T-cell (primary cell): ENCODE measurements at regions of chrX and their contacts with region 1.

Region 1: DNA sequence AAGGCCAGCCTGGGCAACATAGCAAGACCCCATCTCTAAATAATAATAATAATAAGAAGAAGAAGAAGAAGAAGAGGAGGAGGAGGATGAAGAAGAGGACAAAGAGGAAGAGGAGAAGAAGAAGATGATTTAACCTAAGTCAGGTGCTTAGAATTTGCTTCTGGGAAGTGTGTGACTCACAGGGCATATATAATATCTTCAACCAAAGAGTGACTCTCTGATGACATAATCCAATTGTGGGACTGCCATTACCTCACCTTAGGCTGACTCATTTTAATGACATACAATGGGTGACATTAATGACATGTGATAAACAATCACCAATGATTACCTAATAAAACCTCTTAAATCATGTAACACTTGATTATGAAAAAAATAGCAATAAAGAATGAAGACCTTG is 32.7 kb upstream of the MBTPS2 start:
- DNase-seq: no peak
- ATAC-seq: no peak
- H3K4me3 ChIP-seq: no peak overlapping the region
- H3K4me3 Mint-ChIP-seq: no peak overlapping the region
- H3K27ac ChIP-seq: no peak overlapping the region
- H3K27ac Mint-ChIP-seq: no peak overlapping the region
- H3K4me1 ChIP-seq: no peaks in the 10 kb centered on the region
- H3K4me1 Mint-ChIP-seq: no peaks in the 10 kb centered on the region
- H3K27me3 ChIP-seq: no peaks in the 10 kb centered on the region
- H3K27me3 Mint-ChIP-seq: no peaks in the 10 kb centered on the region

Region 2: DNA sequence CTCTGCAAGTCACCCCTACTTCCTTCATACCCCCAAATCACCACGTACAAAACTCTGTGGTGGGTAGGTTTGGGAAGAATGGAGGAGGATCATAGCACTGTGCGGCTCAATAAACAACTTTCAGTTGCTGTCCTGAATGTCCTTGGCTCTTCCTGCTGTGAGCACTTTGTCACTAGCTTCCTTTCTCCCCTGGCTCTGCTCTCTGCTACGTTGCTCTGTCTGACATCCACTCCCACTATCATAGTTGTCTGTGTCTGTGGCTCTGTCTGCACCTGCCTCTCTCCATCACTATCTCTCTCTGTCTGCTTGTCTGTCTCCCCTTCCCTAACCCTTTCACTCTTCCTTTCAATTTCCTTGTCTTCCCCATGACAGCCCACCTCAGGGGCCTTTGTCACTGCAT is 27.6 kb before region 1 on chrX:
- CTCF ChIA-PET with region 1: no interaction called
- POLR2A ChIA-PET with region 1: interaction called in 1 of 2 experiments, 17 read pairs
- DNase-seq: no peak
- ATAC-seq: no peak
- H3K4me3 ChIP-seq: no peak overlapping the region
- H3K4me3 Mint-ChIP-seq: no peak overlapping the region
- H3K27ac ChIP-seq: no peak overlapping the region
- H3K27ac Mint-ChIP-seq: no peak overlapping the region
- H3K4me1 ChIP-seq: no peaks in the 10 kb centered on the region
- H3K4me1 Mint-ChIP-seq: peaks cover 0 to 4% (median 2%) of the 10 kb centered on the region in 3 donors
- H3K27me3 ChIP-seq: no peaks in the 10 kb centered on the region
- H3K27me3 Mint-ChIP-seq: no peaks in the 10 kb centered on the region

Region 3: GRCh38 chrX:21905269-21905668 is 98.6 kb after region 1 on chrX:
- CTCF ChIA-PET with region 1: no interaction called
- POLR2A ChIA-PET with region 1: no interaction called
- DNase-seq: no peak
- ATAC-seq: no peak
- H3K4me3 ChIP-seq: no peak overlapping the region
- H3K4me3 Mint-ChIP-seq: no peak overlapping the region
- H3K27ac ChIP-seq: no peak overlapping the region
- H3K27ac Mint-ChIP-seq: no peak overlapping the region
- H3K4me1 ChIP-seq: no peaks in the 10 kb centered on the region
- H3K4me1 Mint-ChIP-seq: no peaks in the 10 kb centered on the region
- H3K27me3 ChIP-seq: no peaks in the 10 kb centered on the region
- H3K27me3 Mint-ChIP-seq: peaks cover 0 to 6% of the 10 kb centered on the region in 2 donors

Region 4: GRCh38 chrX:22237479-22237878 is 430.8 kb after region 1 on chrX:
- CTCF ChIA-PET with region 1: no interaction called
- POLR2A ChIA-PET with region 1: no interaction called
- DNase-seq: no peak
- ATAC-seq: no peak
- H3K4me3 ChIP-seq: no peak overlapping the region
- H3K4me3 Mint-ChIP-seq: no peak overlapping the region
- H3K27ac ChIP-seq: no peak overlapping the region
- H3K27ac Mint-ChIP-seq: no peak overlapping the region
- H3K4me1 ChIP-seq: no peaks in the 10 kb centered on the region
- H3K4me1 Mint-ChIP-seq: no peaks in the 10 kb centered on the region
- H3K27me3 ChIP-seq: no peaks in the 10 kb centered on the region
- H3K27me3 Mint-ChIP-seq: peaks cover 3 to 31% of the 10 kb centered on the region in 2 donors